Activated CD4-positive, alpha-beta T cell treated with anti-CD3 and anti-CD28 coated beads for 36 hours (primary cell): ENCODE measurements at regions of chr15 and their contacts with region 1.

Region 1: DNA sequence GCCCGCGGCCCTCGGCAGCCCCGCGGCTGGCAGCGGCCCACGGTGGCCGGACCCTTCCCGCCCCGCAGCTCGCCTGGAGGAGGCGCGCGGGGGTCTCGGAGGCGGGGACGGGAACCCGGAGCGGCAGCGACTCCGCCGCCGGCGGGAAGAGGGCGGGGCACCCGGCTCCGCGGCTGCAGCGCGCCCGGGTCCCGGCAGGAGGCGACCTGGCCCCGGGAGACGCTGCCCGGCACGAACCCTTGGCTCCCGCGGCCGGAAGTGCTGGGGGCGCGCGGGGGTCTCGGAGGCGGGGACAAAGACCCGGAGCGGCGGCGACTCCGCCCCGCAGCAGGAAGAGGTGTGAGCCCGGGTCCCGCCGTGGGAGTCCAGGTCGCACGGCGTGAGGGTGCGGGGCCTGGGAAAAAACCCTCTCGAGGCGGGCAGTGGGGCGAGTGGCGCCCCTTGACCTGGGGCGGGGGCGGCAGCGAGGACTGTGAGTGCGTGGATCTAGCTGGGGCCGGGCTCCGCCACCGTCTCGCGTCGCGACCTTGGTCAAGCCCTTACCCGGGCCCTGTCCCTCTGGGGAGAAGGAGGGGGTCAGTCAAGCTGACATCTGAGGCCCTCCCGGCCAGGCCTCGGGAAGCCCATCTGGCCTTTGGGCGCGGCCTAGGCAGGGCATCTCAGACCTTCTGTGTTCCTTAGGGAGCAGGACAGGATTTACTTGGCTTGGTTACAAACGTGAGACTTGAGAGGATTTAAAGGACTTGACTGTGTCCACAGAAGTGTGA is at the start of gene CIB2:
- DNase-seq: peak; percentile 86
- ATAC-seq: peak; percentile 87
- H3K4me3 Mint-ChIP-seq: peak within 1 kb of the TSS; percentile 82
- H3K27ac Mint-ChIP-seq: peak within 1 kb of the TSS; percentile 88
- H3K4me1 Mint-ChIP-seq: peaks cover 20% of the 10 kb centered on the region
- H3K27me3 Mint-ChIP-seq: no peaks in the 10 kb centered on the region
- total RNA-seq, gene CIB2: 0.91 to 1.2 TPM

Region 2: DNA sequence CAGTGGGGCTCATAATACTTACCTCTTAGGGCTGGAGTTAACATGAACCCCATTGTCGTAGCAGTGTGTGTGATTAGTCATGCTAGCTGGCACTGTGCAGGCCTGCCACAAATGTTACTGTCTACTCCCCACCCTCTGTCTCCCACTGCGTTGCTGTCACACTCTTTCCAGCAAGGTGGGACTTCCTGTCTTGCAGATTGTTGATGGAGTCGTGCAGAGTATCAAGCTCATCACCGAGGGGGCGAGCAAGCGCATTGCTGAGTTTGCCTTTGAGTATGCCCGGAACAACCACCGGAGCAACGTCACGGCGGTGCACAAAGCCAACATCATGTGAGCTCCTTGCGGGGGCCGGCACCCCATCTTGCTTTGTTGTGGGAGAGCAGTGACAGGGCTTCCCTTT is 30.6 kb after region 1 on chr15:
- CTCF ChIA-PET with region 1: interaction called, 3 read pairs
- POLR2A ChIA-PET with region 1: no interaction called
- intact Hi-C with region 1: loop called (anchors 1 to 2 kb)
- DNase-seq: peak; percentile 74
- ATAC-seq: peak; percentile 96
- H3K4me3 Mint-ChIP-seq: no peak overlapping the region
- H3K27ac Mint-ChIP-seq: peak overlapping the region; percentile 70
- H3K4me1 Mint-ChIP-seq: peaks cover 12% of the 10 kb centered on the region
- H3K27me3 Mint-ChIP-seq: no peaks in the 10 kb centered on the region

Region 3: GRCh38 chr15:78167227-78167888 is 35.9 kb after region 1 on chr15:
- CTCF ChIA-PET with region 1: interaction called, 5 read pairs
- POLR2A ChIA-PET with region 1: no interaction called
- intact Hi-C with region 1: loop called in 1 of 2 experiments (anchors 2 kb)
- DNase-seq: peak; percentile 61
- ATAC-seq: peak; percentile 100
- H3K4me3 Mint-ChIP-seq: no peak overlapping the region
- H3K27ac Mint-ChIP-seq: peak overlapping the region; percentile 73
- H3K4me1 Mint-ChIP-seq: peaks cover 22% of the 10 kb centered on the region
- H3K27me3 Mint-ChIP-seq: no peaks in the 10 kb centered on the region